Activated naive CD4-positive, alpha-beta T cell treated with anti-CD3 and anti-CD28 coated beads, Interleukin-2, amount 10 ng/mL, durations not matched to agents 7 days and 5 days (primary cell): ENCODE measurements at regions of chr6 and their contacts with region 1.

Region 1: DNA sequence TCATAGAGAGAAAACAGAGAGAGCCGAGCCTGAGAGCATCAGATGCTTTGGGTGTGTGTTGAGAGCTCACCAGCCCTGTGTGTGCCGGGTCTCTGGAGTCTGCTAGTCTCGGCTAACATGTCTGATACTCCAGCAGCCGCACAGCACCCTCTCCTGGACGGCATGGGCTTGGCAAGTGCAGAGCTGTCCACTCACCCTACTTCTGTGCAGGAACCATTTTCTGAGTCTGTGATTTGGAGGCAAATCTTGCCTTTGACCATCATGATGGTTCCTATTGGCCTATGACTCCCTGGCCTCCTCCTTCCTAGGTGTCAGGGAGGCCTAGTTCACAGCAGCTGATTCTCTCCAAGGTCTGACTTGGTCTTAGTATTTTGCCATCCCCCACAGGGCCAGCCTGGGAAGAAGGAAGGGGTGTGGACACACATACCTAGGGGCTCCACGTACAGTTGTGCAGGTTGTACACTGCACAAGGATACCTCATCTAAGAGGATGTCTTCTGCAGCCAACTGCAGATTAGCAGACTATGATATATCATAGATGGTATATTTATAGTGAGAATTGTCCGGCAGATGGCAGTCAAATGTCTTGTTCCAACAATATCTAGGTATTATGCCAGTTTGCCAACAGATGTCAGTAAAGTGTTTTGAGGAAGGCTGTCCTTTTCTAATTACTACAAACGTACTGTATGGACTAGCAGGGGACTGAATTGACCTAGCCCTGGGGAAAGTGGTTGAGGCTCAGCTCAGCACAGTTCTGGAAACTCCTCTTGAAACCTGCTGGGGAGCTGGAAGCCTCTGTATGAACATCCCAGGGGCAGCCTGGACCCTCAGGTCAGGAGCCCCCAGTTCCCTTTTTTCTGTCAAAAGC is 13.0 kb downstream of the FGD2 start:
- DNase-seq: peak; percentile 96
- H3K4me3 Mint-ChIP-seq: no peak overlapping the region
- H3K27ac Mint-ChIP-seq: peak overlapping the region; percentile 85
- H3K4me1 Mint-ChIP-seq: peaks cover 58% of the 10 kb centered on the region
- H3K27me3 Mint-ChIP-seq: no peaks in the 10 kb centered on the region

Region 2: GRCh38 chr6:36851149-36851614 is 167.2 kb before region 1 on chr6:
- CTCF ChIA-PET with region 1: interaction called, 31 read pairs
- DNase-seq: peak; percentile 55
- H3K4me3 Mint-ChIP-seq: no peak overlapping the region
- H3K27ac Mint-ChIP-seq: no peak overlapping the region
- H3K4me1 Mint-ChIP-seq: no peaks in the 10 kb centered on the region
- H3K27me3 Mint-ChIP-seq: peaks cover 15% of the 10 kb centered on the region

Region 3: GRCh38 chr6:36897609-36898008 is 120.8 kb before region 1 on chr6:
- CTCF ChIA-PET with region 1: interaction called, 42 read pairs
- DNase-seq: peak; percentile 58
- H3K4me3 Mint-ChIP-seq: no peak overlapping the region
- H3K27ac Mint-ChIP-seq: no peak overlapping the region
- H3K4me1 Mint-ChIP-seq: peaks cover 3% of the 10 kb centered on the region
- H3K27me3 Mint-ChIP-seq: no peaks in the 10 kb centered on the region

Region 4: DNA sequence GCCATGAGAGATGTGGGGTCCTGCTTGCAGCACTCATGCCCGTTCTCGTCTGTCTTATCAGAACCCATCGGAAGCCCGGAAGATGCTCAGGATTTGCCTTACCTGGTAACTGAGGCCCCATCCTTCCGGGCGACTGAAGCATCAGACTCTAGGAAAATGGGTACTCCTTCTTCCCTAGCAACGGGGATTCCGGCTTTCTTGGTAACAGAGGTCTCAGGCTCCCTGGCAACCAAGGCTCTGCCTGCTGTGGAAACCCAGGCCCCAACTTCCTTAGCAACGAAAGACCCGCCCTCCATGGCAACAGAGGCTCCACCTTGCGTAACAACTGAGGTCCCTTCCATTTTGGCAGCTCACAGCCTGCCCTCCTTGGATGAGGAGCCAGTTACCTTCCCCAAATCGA is 55.6 kb before region 1 on chr6:
- CTCF ChIA-PET with region 1: no interaction called
- DNase-seq: peak; percentile 89
- H3K4me3 Mint-ChIP-seq: no peak overlapping the region
- H3K27ac Mint-ChIP-seq: peak overlapping the region; percentile 78
- H3K4me1 Mint-ChIP-seq: peaks cover 57% of the 10 kb centered on the region
- H3K27me3 Mint-ChIP-seq: peaks cover 18% of the 10 kb centered on the region

Region 5: DNA sequence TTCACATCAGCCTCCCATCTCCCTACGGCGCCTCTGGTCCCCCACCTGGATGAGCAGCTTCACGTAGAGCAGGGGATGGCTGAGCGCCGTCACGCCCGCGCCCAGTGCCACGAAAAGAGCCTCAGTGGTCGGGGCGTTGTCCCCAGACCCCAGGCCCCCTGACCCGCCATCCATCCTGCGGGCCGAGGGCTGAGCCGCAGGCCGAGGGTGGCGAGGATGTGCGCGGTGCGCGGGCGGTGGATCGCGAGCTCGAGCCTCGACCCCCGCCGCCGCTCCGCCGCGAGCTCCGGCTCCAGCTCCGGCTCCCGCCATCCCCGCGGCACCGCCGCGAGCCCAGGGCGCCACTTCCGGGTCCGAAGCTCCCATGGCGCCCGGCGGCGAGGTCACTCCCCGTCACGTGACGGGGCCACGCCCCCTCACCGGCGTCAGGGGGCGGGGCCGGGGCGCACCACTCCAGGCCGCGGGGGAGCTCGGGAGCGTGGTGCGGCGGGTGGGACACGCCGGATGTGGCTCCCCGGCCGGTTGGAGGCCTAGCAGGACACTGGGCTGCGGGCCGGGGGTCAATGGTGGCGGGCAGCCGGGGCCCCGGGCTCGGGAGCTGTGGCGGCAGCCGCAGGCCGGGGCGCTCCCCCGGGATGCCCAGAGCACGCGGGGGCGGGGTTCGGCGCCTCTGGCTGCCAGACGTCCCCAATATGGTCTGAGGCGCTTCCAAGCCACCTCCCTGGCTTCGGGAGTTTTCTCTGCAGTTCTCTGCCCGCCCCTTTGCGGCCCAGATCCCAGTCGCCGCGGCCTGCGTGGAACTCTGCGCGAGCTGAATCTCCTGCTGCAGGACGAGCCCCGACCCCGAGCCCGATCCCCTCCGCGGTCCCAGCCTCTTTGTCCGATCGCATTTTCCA is 32.4 kb before region 1 on chr6 and contains the start of gene MTCH1:
- CTCF ChIA-PET with region 1: interaction called, 54 read pairs
- DNase-seq: peak; percentile 88
- H3K4me3 Mint-ChIP-seq: peak within 1 kb of the TSS; percentile 91
- H3K27ac Mint-ChIP-seq: peak within 1 kb of the TSS; percentile 95
- H3K4me1 Mint-ChIP-seq: peaks cover 24% of the 10 kb centered on the region
- H3K27me3 Mint-ChIP-seq: peaks cover 13% of the 10 kb centered on the region

Region 6: GRCh38 chr6:37169496-37170272 is 151.3 kb after region 1 on chr6 and contains the start of gene PIM1:
- CTCF ChIA-PET with region 1: interaction called, 293 read pairs
- DNase-seq: peak; percentile 99
- H3K4me3 Mint-ChIP-seq: peak within 1 kb of the TSS; percentile 97
- H3K27ac Mint-ChIP-seq: peak within 1 kb of the TSS; percentile 99
- H3K4me1 Mint-ChIP-seq: peaks cover 21% of the 10 kb centered on the region
- H3K27me3 Mint-ChIP-seq: peaks cover 10% of the 10 kb centered on the region

Region 7: GRCh38 chr6:37324131-37325033 is 306.0 kb after region 1 on chr6:
- CTCF ChIA-PET with region 1: interaction called, 26 read pairs
- DNase-seq: no peak
- H3K4me3 Mint-ChIP-seq: no peak overlapping the region
- H3K27ac Mint-ChIP-seq: no peak overlapping the region
- H3K4me1 Mint-ChIP-seq: peaks cover 2% of the 10 kb centered on the region
- H3K27me3 Mint-ChIP-seq: no peaks in the 10 kb centered on the region